Adrenal gland (tissue), 19 donors: ENCODE measurements at regions of chr19 and their contacts with region 1.

Region 1: GRCh38 chr19:53132141-53132991 is at the start of gene ZNF415:
- DNase-seq: peak; percentile 85 to 92 (median 91)
- H3K4me3 ChIP-seq: peak within 1 kb of the TSS; percentile 23 to 73 (median 42)
- H3K27ac ChIP-seq: peak within 1 kb of the TSS; percentile 53 to 97 (median 92)
- H3K4me1 ChIP-seq: peaks cover 22 to 31% of the 10 kb centered on the region in 2 donors
- H3K27me3 ChIP-seq: no peaks in the 10 kb centered on the region
- CTCF ChIP-seq: no peak
- POLR2A ChIP-seq: peak in 1 of 2 donors; percentile 86
- total RNA-seq, gene ZNF415: 20.3 to 59.2 (median 38.5) TPM

Region 2: GRCh38 chr19:53086949-53087348 is 45.4 kb before region 1 on chr19:
- intact Hi-C with region 1: loop called in 1 of 2 experiments (anchors 5 kb)
- DNase-seq: peak; percentile 87 to 98 (median 94)
- H3K4me3 ChIP-seq: no peak overlapping the region
- H3K27ac ChIP-seq: peak overlapping the region; percentile 62 to 91 (median 79)
- H3K4me1 ChIP-seq: peaks cover 13 to 27% of the 10 kb centered on the region in 2 donors
- H3K27me3 ChIP-seq: no peaks in the 10 kb centered on the region
- CTCF ChIP-seq: no peak
- POLR2A ChIP-seq: no peak

Region 3: GRCh38 chr19:53103198-53103944 is 29.0 kb before region 1 on chr19 and contains the start of gene ZNF160:
- intact Hi-C with region 1: loop called in 1 of 2 experiments (anchors 2 kb)
- DNase-seq: peak; percentile 99 to 100 (median 99)
- H3K4me3 ChIP-seq: peak within 1 kb of the TSS; percentile 73 to 95 (median 84)
- H3K27ac ChIP-seq: peak within 1 kb of the TSS; percentile 86 to 98 (median 97)
- H3K4me1 ChIP-seq: peaks cover 28 to 30% of the 10 kb centered on the region in 2 donors
- H3K27me3 ChIP-seq: no peaks in the 10 kb centered on the region
- CTCF ChIP-seq: no peak
- POLR2A ChIP-seq: peak; percentile 91 to 98
- total RNA-seq, gene ZNF160: 28.3 to 102 (median 68.7) TPM